ENCODE measurements at regions of chr7 and their contacts with region 1.

Region 1: GRCh38 chr7:70668606-70669358 is 463.2 kb upstream of the GALNT17 start:
- DNase-seq: no peak
- ATAC-seq: peak; percentile 96

Region 2: DNA sequence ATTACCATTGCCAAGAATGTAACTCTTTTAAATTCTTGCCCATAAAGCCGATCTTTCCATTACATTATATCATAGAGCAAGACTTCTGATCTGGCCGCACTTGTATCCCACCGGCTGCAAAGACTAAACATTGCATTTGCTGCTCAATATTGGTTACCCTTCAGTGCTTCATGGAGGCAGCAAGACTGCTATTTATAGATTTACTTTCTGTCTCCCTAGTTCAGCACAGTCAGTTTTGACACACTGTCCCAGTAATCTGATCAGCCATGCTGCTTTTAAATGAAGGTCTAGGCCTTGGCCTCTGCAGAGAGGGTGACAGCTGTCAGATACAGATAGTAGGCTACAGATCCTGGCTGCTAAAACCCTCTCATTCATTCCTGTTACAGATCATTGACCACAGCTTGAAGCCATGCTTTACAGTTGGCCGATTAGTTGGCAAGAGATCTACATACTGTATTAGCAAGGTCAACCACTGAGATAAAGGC is 99.4 kb before region 1 on chr7:
- intact Hi-C with region 1: loop called (anchors 1 kb)
- DNase-seq: no peak
- ATAC-seq: peak; percentile 53

Region 3: DNA sequence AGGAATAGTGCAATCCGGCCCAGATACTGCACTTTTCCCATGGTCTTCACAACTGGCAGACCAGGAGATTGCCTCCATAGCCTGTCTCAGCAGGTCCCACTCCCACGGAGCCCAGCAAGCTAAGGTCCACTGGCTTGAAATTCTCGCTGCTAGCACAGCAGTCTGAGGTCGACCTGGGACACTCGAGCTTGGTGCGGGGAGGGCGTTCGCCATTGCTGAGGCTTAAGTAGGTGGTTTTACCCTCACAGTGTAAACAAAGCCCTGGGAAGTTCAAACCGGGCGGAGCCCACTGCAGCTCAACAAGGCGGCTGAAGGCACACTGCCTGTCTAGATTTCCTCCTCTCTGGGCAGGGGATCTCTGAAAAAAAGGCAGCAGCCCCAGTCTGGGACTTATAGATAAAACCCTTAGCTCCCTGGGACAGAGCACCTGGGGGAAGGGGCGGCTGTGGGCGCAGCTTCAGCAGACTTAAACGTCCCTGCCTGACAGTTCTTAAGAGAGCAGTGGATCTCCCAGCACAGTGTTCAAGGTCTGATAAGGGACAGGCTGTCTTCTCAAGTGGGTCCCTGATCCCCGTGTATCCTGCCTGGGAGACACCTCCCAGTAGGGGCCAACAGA is 169.6 kb after region 1 on chr7:
- intact Hi-C with region 1: no loop called
- DNase-seq: no peak
- ATAC-seq: no peak